ENCODE measurements at regions of chr7 and their contacts with region 1.

Region 1: GRCh38 chr7:12549106-12549505 is 21.4 kb upstream of the SCIN start:
- DNase-seq: no peak
- ATAC-seq: no peak
- H3K4me3 ChIP-seq: no peak overlapping the region
- H3K27ac ChIP-seq: no peak overlapping the region
- H3K4me1 ChIP-seq: peaks cover 11% of the 10 kb centered on the region; the same call in 1 of the 2 replicates
- H3K27me3 ChIP-seq: no peaks in the 10 kb centered on the region; the same call in 1 of the 2 replicates
- CTCF ChIP-seq: no peak

Region 2: GRCh38 chr7:12534046-12534445 is 15.1 kb before region 1 on chr7:
- CTCF ChIA-PET with region 1: no interaction called
- POLR2A ChIA-PET with region 1: interaction called, 10 read pairs
- in situ Hi-C with region 1: no loop called
- intact Hi-C with region 1: no loop called
- DNase-seq: no peak
- ATAC-seq: no peak
- H3K4me3 ChIP-seq: no peak overlapping the region
- H3K27ac ChIP-seq: no peak overlapping the region
- H3K4me1 ChIP-seq: no peaks in the 10 kb centered on the region
- H3K27me3 ChIP-seq: no peaks in the 10 kb centered on the region
- CTCF ChIP-seq: no peak

Region 3: DNA sequence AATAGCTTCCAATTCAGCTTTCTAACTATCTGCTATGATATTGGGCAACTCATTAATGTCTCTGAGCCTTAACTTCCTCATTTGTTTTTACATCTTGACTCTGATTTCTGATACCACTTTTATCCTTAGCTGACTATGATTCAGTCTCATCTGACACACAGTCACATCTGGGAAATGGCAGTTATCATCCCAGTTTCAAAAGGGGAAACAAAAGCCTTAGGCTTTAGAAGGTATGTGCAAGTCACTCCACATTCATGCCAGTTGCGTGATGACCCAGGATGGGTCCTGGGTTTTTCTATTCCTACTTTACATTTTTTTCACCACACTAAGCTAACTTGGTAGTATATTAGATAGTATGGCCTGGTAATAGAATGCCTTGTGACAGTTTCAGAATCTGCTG is 34.1 kb after region 1 on chr7:
- CTCF ChIA-PET with region 1: no interaction called
- POLR2A ChIA-PET with region 1: no interaction called
- in situ Hi-C with region 1: no loop called
- intact Hi-C with region 1: no loop called
- DNase-seq: no peak
- ATAC-seq: no peak
- H3K4me3 ChIP-seq: no peak overlapping the region
- H3K27ac ChIP-seq: no peak overlapping the region
- H3K4me1 ChIP-seq: no peaks in the 10 kb centered on the region
- H3K27me3 ChIP-seq: no peaks in the 10 kb centered on the region
- CTCF ChIP-seq: no peak